A549 (cell line): ENCODE measurements at regions of chr14 and their contacts with region 1.

Region 1: DNA sequence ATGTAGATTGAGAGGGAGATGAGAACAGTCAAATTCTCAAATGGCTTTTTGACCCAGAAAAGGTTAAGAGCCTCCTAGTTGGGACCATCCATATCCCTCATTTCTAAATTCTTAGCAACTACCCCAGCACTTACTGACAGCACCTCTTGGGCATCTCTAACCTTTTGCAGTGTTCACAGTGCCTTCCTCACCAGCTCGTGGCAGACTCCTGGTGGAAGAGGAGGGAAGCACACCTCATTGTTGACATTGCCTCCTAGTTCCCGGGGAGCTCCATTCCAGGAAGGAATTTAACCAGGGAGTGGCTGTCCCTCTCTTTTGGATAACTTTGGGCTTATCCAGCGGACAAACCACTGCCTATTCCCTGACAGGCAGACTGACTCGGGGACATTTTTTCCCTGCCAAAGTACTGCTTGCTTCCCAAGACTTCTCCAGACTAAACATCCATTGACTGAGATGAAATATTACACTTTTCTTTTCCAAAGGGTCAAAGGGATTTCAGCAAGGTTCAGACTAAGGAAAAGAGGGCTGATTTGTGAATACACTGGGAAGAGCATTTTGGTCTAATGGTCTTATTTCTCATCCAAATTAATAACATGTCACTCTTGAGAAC is 9.0 kb upstream of the OR6J1 start:
- DNase-seq: peak; percentile 78 to 83
- ATAC-seq: peak; percentile 92 to 95
- H3K4me3 ChIP-seq: no peak overlapping the region
- H3K27ac ChIP-seq: peak overlapping the region; percentile 46 to 59; a peak in 5 of 6 replicates
- H3K4me1 ChIP-seq: peaks cover 38% of the 10 kb centered on the region; the same call in 2 of the 3 replicates
- CTCF ChIP-seq: peak; percentile 82
- EP300 ChIP-seq: no peak
- POLR2A ChIP-seq: no peak
- RAD21 ChIP-seq: peak; percentile 88 to 90

Region 2: GRCh38 chr14:22589096-22589839 is 63.8 kb before region 1 on chr14 and contains the start of gene DAD1:
- CTCF ChIA-PET with region 1: interaction called, 84 read pairs
- POLR2A ChIA-PET with region 1: interaction called, 16 read pairs
- DNase-seq: peak; percentile 99
- ATAC-seq: peak; percentile 96
- H3K4me3 ChIP-seq: peak within 1 kb of the TSS; percentile 80
- H3K27ac ChIP-seq: peak within 1 kb of the TSS; percentile 79 to 90
- H3K4me1 ChIP-seq: peaks cover 32% of the 10 kb centered on the region
- CTCF ChIP-seq: no peak; the same call in 2 of the 3 replicates
- EP300 ChIP-seq: no peak
- POLR2A ChIP-seq: peak; percentile 89
- RAD21 ChIP-seq: 0 out of 5 replicates have a peak, but pooled peaks of 1 of the 2 experiments have one; percentile 26
- polyA plus RNA-seq, gene DAD1: 458 and 474 TPM in 2 replicates

Region 3: GRCh38 chr14:22668417-22668816 is 15.3 kb after region 1 on chr14:
- CTCF ChIA-PET with region 1: interaction called, 24 read pairs
- POLR2A ChIA-PET with region 1: no interaction called
- DNase-seq: peak in 1 of 2 experiments; percentile 24
- ATAC-seq: peak; percentile 69 to 71; a peak in 5 of 6 replicates
- H3K4me3 ChIP-seq: no peak overlapping the region
- H3K27ac ChIP-seq: peak overlapping the region; percentile 58 to 62
- H3K4me1 ChIP-seq: peaks cover 22% of the 10 kb centered on the region
- CTCF ChIP-seq: no peak
- EP300 ChIP-seq: no peak
- POLR2A ChIP-seq: no peak
- RAD21 ChIP-seq: no peak

Region 4: DNA sequence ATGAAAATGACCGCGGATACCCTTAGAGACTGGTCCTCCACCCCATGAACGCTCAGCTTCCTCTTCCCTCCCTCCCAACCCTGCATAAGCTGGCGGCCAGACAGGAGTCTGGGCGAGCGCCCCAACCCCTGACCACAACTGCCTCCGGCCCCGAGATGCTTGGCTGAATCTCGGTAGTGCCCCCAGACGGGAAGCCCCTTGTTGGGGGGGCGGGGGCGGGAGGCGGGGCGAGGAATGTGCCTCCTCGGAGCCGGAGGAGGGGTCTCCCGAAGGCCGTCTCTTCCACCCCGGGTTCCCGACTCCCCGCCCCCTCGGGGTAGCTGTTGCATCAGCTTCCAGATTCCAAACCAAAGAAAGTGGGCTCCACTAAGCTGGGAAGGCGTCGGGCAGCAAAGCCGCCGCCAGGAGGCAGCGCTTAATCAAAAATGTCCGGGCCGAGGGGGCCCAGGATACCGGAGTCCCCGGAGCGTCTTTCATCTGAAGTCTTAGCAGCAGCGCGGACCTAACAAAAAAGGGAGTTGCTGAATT is 169.5 kb after region 1 on chr14:
- CTCF ChIA-PET with region 1: interaction called, 18 read pairs
- POLR2A ChIA-PET with region 1: interaction called, 3 read pairs
- DNase-seq: peak; percentile 83 to 88
- ATAC-seq: peak; percentile 68 to 90
- H3K4me3 ChIP-seq: peak overlapping the region; percentile 33
- H3K27ac ChIP-seq: peak overlapping the region; percentile 82 to 93
- H3K4me1 ChIP-seq: peaks cover 74% of the 10 kb centered on the region
- CTCF ChIP-seq: peak; percentile 85
- EP300 ChIP-seq: no peak
- POLR2A ChIP-seq: no peak
- RAD21 ChIP-seq: peak; percentile 85 to 94